OCI-LY7 (cell line): ENCODE measurements at regions of chr14 and their contacts with region 1.

Region 1: DNA sequence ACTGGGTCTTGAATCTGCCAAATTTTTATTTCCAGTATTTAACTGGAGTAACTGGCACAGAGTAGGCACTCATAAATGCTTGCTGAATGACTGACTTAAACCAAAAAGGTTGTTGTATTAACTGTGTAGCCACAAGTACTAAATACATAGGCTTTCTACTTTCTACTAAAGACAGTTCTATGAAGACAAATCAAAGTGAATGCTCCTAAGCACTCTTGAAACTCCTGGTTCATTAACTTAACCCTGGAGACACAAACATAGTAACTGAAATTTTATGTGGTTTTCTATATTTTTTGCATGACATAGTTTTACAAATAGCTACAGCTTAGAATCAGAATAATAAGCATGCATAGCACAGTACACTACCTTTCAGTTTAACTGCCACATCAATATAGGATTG is 70.4 kb downstream of the TXNDC16 start:
- DNase-seq: no peak
- H3K4me3 ChIP-seq: no peak overlapping the region
- H3K27ac ChIP-seq: no peak overlapping the region
- H3K4me1 ChIP-seq: no peaks in the 10 kb centered on the region
- CTCF ChIP-seq: no peak

Region 2: DNA sequence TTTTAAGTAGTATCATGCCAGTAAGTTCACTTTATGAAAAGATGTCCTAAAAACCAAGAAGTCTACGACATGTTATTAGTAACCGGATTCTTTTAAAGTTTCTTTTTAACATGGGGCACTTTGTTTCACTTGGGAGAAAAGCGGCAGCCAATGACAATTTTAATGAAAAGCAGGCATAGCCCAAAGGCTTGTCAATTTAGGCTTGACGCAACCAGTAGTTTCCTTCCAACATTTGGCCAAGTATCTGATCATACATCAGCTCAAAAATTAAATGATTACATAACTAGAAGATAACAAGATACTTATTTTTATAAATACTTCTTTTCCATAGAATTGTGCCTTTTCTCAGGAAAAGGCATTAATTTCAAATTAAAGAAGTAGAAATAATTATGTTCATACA is 42.4 kb before region 1 on chr14:
- CTCF ChIA-PET with region 1: no interaction called
- POLR2A ChIA-PET with region 1: no interaction called
- intact Hi-C with region 1: no loop called
- DNase-seq: no peak
- H3K4me3 ChIP-seq: no peak overlapping the region
- H3K27ac ChIP-seq: no peak overlapping the region
- H3K4me1 ChIP-seq: no peaks in the 10 kb centered on the region
- CTCF ChIP-seq: no peak

Region 3: DNA sequence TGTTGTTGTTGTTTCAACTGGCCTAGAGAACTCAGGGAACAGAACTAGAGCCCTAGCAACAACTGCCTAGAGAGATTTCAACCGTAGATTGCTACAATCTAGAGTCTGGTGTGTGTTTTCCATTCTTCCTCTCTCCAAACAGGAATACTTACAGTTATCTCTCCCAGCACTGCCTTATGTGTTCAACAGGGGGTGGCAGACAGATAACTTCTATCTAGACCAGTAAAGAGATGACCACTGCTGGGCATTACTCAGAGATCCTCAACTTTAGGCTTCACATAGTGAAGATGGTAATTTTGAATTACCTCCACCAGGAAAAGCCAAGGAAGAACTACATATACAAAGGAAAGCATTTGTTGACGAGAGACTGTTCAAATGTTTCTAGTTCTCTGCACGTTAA is 65.7 kb after region 1 on chr14:
- CTCF ChIA-PET with region 1: no interaction called
- POLR2A ChIA-PET with region 1: no interaction called
- intact Hi-C with region 1: no loop called
- DNase-seq: no peak
- H3K4me3 ChIP-seq: peak overlapping the region; percentile 55
- H3K27ac ChIP-seq: peak overlapping the region; percentile 84
- H3K4me1 ChIP-seq: peaks cover 58% of the 10 kb centered on the region
- CTCF ChIP-seq: 0 out of 2 replicates have a peak, but pooled peaks have one; percentile 21

Region 4: GRCh38 chr14:52780893-52781292 is 299.0 kb after region 1 on chr14:
- CTCF ChIA-PET with region 1: no interaction called
- POLR2A ChIA-PET with region 1: interaction called, 3 read pairs
- intact Hi-C with region 1: loop called (anchors 1 kb)
- DNase-seq: no peak
- H3K4me3 ChIP-seq: no peak overlapping the region
- H3K27ac ChIP-seq: no peak overlapping the region
- H3K4me1 ChIP-seq: no peaks in the 10 kb centered on the region
- CTCF ChIP-seq: no peak

Region 5: DNA sequence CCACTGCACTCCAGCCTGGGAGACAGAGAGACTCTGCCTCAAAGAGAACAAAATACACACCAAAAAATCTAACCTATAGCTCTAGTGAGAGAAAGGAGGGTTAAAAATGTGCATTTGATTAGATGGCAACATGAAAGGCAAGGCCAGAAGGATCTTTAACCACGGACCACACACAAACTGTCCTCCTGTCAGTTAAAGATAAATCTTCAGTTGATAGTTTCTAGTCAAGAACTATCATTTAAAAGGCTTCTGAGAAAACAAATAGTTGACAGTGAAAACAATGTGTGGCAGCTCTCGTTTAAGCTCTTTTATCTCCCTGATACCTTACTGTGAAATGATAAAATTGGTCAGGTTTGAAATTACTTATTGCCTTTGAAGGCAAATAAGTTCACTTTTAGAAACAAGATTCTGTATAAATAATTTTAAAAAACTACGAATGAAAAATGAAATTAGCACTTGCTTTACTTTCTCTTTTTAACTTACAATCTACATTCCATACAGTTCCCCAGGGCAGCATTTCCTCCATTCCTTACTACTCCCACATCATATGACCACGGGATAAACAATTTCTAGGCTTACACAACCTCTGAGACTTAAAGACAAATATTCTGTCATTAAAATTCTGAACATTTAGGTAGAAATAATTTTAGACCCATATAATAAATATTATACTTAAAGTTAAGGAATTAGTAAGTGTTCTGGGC is 380.9 kb after region 1 on chr14:
- CTCF ChIA-PET with region 1: no interaction called
- POLR2A ChIA-PET with region 1: no interaction called
- intact Hi-C with region 1: no loop called
- DNase-seq: no peak
- H3K4me3 ChIP-seq: no peak overlapping the region
- H3K27ac ChIP-seq: no peak overlapping the region
- H3K4me1 ChIP-seq: no peaks in the 10 kb centered on the region
- CTCF ChIP-seq: no peak